Prostate gland (tissue), 2 donors: ENCODE measurements at regions of chr5 and their contacts with region 1.

Region 1: GRCh38 chr5:127564002-127564769 is 46.7 kb downstream of the PRRC1 start:
- DNase-seq: peak; percentile 60
- H3K4me3 ChIP-seq: no peak overlapping the region
- H3K27ac ChIP-seq: no peak overlapping the region
- H3K4me1 ChIP-seq: no peaks in the 10 kb centered on the region
- H3K27me3 ChIP-seq: no peaks in the 10 kb centered on the region
- CTCF ChIP-seq: peak in 3 of 4 experiments; percentile 66 to 84 (median 79)
- POLR2A ChIP-seq: no peak

Region 2: DNA sequence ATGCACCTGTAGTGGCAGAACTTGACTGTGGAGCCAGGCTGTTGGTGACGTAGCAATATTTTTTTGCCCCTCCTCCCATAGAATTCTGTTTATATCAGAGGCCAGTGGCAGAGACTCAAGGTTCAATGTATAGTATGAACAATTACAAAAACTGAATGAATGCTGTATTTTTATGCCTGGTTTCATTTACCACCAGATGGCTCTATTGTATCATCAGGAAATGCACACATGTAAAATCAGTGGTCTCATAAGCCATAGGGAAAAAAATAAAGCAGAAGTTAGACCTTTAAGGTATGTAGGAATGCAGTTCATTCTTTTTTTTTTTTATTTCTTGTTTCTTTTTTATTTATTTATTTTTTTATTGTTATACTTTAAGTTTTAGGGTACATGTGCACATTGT is 182.6 kb after region 1 on chr5:
- intact Hi-C with region 1: loop called (anchors 10 kb)
- DNase-seq: no peak
- H3K4me3 ChIP-seq: no peak overlapping the region
- H3K27ac ChIP-seq: no peak overlapping the region
- H3K4me1 ChIP-seq: no peaks in the 10 kb centered on the region
- H3K27me3 ChIP-seq: no peaks in the 10 kb centered on the region
- CTCF ChIP-seq: peak in 3 of 4 experiments; percentile 19 to 63 (median 57)
- POLR2A ChIP-seq: no peak